Endothelial cell of umbilical vein (primary cell): ENCODE measurements at regions of chr15 and their contacts with region 1.

Region 1: GRCh38 chr15:83164111-83164770 is 43.4 kb downstream of the HDGFL3 start:
- DNase-seq: peak; percentile 80
- H3K4me3 ChIP-seq: peak overlapping the region in 1 of 3 experiments; percentile 49
- H3K27ac ChIP-seq: peak overlapping the region; percentile 89
- H3K4me1 ChIP-seq: peaks cover 44% of the 10 kb centered on the region
- H3K27me3 ChIP-seq: no peaks in the 10 kb centered on the region
- CTCF ChIP-seq: no peak
- POLR2A ChIP-seq: no peak

Region 2: DNA sequence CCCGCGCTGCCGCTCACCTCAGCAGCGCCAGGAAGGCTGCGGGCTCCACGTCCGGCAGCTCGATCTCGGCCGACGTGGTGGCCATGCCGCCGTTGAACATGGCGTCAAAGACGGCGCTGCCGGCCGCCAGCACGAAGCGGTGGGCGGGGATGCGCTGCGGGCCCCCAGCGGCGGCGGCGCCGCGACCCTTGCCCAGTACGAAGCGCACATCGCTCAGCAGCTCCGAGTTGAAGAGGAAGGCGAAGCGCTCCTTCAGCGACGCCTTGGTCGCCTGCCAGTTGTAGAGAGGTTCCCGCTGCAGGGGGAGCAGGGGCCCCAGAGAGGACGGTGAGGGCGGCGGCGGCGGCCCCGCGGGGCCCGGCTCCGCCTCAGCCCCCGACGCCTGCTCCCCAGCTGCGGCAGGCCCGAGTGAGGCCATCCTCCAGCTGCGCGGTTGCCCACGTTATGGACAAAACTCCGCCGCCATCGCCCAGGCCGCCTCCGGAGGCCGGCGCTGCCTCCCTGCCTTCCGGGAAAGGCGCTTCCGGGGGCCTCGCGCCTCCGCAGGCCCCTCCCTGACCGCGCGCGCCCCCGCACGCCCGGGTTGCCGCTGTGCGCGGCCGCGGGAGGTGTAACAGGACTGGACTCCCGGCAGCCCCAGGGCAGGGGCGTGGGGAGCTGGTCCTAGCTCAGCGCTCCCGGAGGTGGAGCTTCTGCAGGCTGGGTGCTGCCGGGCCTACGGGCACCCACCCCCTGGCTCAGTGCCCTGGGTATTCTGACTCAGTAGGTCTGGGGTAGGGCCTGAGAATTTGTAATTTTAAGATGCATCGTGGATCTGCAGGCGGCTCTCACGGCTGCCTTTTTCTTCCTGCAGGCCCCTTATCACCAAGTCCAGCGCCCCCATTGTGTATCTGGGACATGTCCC is 97.3 kb before region 1 on chr15 and contains the start of gene BTBD1:
- CTCF ChIA-PET with region 1: no interaction called
- POLR2A ChIA-PET with region 1: no interaction called
- dilution Hi-C with region 1: no loop called
- intact Hi-C with region 1: loop called (anchors 1 kb)
- DNase-seq: peak; percentile 93
- H3K4me3 ChIP-seq: peak within 1 kb of the TSS; percentile 75 to 99 (median 98)
- H3K27ac ChIP-seq: peak within 1 kb of the TSS; percentile 66
- H3K4me1 ChIP-seq: peaks cover 36% of the 10 kb centered on the region
- H3K27me3 ChIP-seq: no peaks in the 10 kb centered on the region
- CTCF ChIP-seq: peak in 1 of 2 donors; percentile 14
- POLR2A ChIP-seq: peak; percentile 95
- total RNA-seq, gene BTBD1: 56.9 and 58.0 TPM in 2 replicates

Region 3: DNA sequence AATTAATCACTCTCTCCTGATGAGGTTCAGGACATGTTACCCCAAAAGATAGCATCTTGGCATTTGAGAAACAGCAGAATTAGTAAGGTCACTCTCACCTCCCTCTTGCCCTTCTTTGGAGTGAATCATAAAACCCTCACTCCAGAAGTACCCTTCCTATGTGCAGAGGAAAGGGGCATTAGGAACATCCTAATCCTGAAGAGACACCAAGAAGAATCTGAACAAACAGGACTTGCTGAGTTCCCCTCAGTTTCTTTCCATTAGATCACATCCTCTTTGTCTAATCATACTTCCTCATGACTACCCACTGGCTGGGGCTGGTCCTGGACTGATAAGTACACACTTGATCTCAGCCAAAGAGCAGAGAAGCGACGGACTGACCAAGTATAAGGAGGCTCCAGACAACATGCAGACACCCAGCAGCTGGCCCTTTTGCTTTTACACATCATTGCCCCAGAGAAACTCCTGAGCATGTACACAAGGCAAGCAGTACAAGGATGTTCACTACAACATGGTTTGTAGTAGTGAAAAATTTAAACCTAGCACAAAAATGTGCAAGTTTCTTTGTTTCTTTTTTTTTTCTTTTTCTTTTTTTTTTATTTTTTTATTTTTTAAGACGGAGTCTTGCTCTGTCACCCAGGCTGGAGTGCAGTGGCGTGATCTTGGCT is 71.8 kb before region 1 on chr15:
- CTCF ChIA-PET with region 1: no interaction called
- POLR2A ChIA-PET with region 1: no interaction called
- dilution Hi-C with region 1: no loop called
- intact Hi-C with region 1: no loop called
- DNase-seq: peak; percentile 95
- H3K4me3 ChIP-seq: no peak overlapping the region
- H3K27ac ChIP-seq: peak overlapping the region; percentile 93
- H3K4me1 ChIP-seq: peaks cover 12% of the 10 kb centered on the region
- H3K27me3 ChIP-seq: no peaks in the 10 kb centered on the region
- CTCF ChIP-seq: no peak
- POLR2A ChIP-seq: peak; percentile 84

Region 4: DNA sequence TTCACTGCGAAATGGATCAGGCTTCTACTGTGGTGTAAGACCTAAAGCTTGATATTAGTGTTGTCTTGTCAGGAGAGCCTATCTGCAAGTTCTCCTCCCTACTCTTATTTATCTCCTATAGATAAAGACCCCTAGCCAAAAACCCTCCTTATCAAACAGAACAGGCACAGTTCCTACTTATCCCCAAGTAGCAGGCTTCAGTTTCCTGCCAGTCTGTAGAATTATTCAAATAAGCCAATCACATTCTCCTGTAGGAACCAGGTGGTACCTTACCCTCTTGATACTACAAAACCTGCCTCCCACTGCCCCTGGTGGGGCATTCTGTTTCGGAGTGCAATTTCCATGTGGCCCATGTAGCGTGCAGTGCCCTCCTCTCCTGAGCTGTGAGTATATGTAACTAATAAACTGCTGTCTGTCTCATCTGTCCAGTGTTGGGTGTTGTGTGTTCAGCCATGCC is 14.7 kb after region 1 on chr15:
- CTCF ChIA-PET with region 1: no interaction called
- POLR2A ChIA-PET with region 1: no interaction called
- dilution Hi-C with region 1: no loop called
- intact Hi-C with region 1: loop called (anchors 1 kb)
- DNase-seq: no peak
- H3K4me3 ChIP-seq: no peak overlapping the region
- H3K27ac ChIP-seq: no peak overlapping the region
- H3K4me1 ChIP-seq: no peaks in the 10 kb centered on the region
- H3K27me3 ChIP-seq: no peaks in the 10 kb centered on the region
- CTCF ChIP-seq: no peak
- POLR2A ChIP-seq: no peak

Region 5: DNA sequence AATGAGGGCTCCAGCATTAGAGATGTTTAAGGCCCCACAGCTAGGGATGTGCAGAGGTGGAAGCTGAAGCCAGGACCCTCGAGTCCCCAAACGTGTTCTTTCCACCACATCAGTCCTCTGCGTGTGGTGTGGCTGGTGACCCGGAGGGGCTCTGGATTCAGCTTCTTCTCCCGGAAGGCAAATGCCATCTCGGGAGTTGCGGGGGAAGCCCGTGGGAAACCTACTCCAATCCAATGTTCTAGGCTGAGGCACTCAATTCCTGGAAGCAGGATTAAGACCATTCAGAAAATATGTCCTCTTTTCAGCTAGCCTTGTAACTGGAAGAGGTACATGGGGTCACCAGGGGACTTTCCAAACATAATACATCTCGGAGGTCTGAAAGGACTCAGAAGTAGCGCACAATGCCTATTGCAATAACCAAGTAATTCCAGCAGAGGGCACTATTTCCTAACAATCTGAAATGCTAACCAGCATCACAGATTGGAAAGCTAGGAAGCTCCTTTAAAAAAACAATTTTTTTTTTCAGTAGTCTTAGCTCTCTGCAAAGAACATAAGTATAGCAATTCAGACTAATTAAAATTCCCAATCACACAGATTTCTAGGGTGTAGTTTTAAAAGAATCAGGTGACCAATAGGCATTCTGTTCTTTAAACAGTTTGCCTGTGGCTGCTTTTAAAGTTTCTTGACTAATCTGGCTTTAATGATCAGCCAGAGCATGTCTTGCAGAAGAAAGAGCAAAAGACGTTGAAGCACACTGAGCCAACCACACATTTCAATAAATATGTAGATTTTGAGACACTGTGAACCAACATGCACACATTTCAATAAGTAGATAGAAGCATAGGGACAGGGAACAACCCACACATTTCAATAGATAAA is 84.1 kb after region 1 on chr15:
- CTCF ChIA-PET with region 1: no interaction called
- POLR2A ChIA-PET with region 1: no interaction called
- dilution Hi-C with region 1: no loop called
- intact Hi-C with region 1: no loop called
- DNase-seq: peak; percentile 78
- H3K4me3 ChIP-seq: no peak overlapping the region
- H3K27ac ChIP-seq: no peak overlapping the region
- H3K4me1 ChIP-seq: no peaks in the 10 kb centered on the region
- H3K27me3 ChIP-seq: peaks cover 10 to 16% of the 10 kb centered on the region in 2 experiments
- CTCF ChIP-seq: peak; percentile 54 to 66
- POLR2A ChIP-seq: no peak

Region 6: DNA sequence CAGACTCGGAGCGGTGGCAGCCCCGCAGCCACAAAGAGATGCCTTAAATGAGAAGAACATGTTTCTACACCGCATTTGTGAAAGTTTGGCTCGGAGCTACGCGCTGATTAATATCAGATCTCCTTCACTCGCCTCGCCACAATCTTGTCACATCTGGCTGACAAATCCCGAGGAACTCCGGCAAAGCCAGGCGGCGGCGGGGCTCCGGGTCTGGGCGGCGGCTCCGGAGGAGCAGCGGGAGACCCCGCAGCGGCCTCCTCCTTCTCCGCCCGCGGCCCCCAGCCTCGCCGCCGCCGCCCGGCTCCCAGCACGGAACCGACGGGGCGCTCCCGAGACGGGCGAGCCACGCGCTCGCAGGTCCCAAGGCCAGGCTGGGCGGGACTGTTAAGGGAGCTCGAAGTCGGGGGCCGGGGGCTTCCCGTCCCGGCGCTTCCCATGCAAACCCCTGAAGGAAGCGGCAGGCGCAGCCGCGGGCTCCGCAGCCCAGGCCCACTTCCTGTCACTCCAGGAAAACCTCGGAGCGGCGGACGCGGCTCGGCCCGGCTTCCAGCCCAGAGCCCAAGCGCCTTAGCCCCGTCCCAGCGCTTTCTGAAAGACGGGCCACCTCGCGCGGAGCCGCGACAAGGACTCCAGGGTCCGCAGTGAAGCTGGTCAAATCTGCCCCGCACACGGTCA is 119.0 kb after region 1 on chr15:
- CTCF ChIA-PET with region 1: no interaction called
- POLR2A ChIA-PET with region 1: interaction called, 3 read pairs
- dilution Hi-C with region 1: no loop called
- intact Hi-C with region 1: loop called (anchors 2 kb)
- DNase-seq: peak; percentile 47
- H3K4me3 ChIP-seq: peak overlapping the region; percentile 57 to 81 (median 74)
- H3K27ac ChIP-seq: peak overlapping the region; percentile 25
- H3K4me1 ChIP-seq: peaks cover 31% of the 10 kb centered on the region
- H3K27me3 ChIP-seq: peaks cover 3 to 9% of the 10 kb centered on the region in 2 experiments
- CTCF ChIP-seq: no peak
- POLR2A ChIP-seq: no peak

Region 7: GRCh38 chr15:83295417-83295816 is 131.2 kb after region 1 on chr15:
- CTCF ChIA-PET with region 1: no interaction called
- POLR2A ChIA-PET with region 1: no interaction called
- dilution Hi-C with region 1: no loop called
- intact Hi-C with region 1: no loop called
- DNase-seq: no peak
- H3K4me3 ChIP-seq: no peak overlapping the region
- H3K27ac ChIP-seq: no peak overlapping the region
- H3K4me1 ChIP-seq: no peaks in the 10 kb centered on the region
- H3K27me3 ChIP-seq: no peaks in the 10 kb centered on the region
- CTCF ChIP-seq: no peak
- POLR2A ChIP-seq: no peak

Region 8: GRCh38 chr15:83682476-83683088 is 518.3 kb after region 1 on chr15:
- CTCF ChIA-PET with region 1: no interaction called
- POLR2A ChIA-PET with region 1: no interaction called
- dilution Hi-C with region 1: no loop called
- intact Hi-C with region 1: no loop called
- DNase-seq: no peak
- H3K4me3 ChIP-seq: no peak overlapping the region
- H3K27ac ChIP-seq: no peak overlapping the region
- H3K4me1 ChIP-seq: no peaks in the 10 kb centered on the region
- H3K27me3 ChIP-seq: no peaks in the 10 kb centered on the region
- CTCF ChIP-seq: no peak
- POLR2A ChIP-seq: no peak